T-cell (primary cell): ENCODE measurements at regions of chr12 and their contacts with region 1.

Region 1: GRCh38 chr12:98593351-98594049 is at the start of gene SLC25A3:
- DNase-seq: peak; percentile 82 to 99 (median 93)
- ATAC-seq: peak; percentile 96 to 98 (median 98)
- H3K4me3 ChIP-seq: peak within 1 kb of the TSS; percentile 85 to 97
- H3K4me3 Mint-ChIP-seq: peak within 1 kb of the TSS; percentile 90 to 95 (median 91)
- H3K27ac ChIP-seq: peak within 1 kb of the TSS; percentile 94
- H3K27ac Mint-ChIP-seq: peak within 1 kb of the TSS; percentile 95 to 99
- H3K4me1 ChIP-seq: peaks cover 18 to 21% of the 10 kb centered on the region in 2 experiments
- H3K4me1 Mint-ChIP-seq: peaks cover 27 to 43% (median 35%) of the 10 kb centered on the region in 3 donors
- H3K27me3 ChIP-seq: no peaks in the 10 kb centered on the region
- H3K27me3 Mint-ChIP-seq: no peaks in the 10 kb centered on the region
- total RNA-seq, gene SLC25A3: 256 to 438 (median 269) TPM

Region 2: DNA sequence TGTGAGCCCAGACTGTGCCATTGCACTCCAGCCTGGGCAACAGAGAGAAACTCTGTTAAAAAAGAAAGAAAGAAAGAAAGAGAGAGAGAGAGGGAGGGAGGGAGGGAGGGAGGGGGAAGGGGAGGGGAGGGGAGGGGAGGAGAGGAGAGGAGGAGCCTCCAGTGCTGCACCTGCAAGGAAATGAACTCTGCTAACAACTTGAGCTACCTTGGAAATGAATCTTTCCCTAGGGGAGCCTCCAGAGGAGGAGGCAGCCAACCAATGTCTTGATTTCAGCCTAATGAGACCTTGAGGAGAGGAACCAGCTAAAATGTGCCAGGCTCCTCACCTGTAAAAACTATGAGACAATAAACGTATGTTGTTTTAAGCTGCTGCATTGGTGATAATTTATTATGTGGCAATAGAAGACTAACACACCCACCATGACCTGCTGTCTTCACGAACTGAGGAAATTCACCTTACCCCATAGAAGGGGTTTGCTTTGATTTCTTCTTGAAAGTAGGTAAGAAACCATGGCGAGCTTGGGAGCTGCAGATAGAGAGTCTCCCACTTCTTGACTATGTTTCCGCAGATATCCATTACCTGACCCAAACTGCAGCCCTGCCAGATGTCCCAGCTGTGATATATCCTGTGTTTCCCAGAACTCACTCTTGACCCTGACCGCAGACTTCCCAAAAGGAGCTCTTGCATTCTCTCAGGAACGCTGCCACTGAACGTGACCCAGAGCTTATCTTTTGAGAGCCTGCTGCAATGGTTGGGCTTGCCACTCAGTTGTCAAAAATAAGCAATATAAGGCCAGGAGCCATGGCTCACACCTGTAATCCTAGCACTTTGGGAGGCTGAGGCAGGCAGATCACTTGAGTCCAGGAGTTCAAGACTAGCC is 109.6 kb before region 1 on chr12:
- CTCF ChIA-PET with region 1: no interaction called
- POLR2A ChIA-PET with region 1: no interaction called
- DNase-seq: no peak
- ATAC-seq: no peak
- H3K4me3 ChIP-seq: no peak overlapping the region
- H3K4me3 Mint-ChIP-seq: no peak overlapping the region
- H3K27ac ChIP-seq: no peak overlapping the region
- H3K27ac Mint-ChIP-seq: no peak overlapping the region
- H3K4me1 ChIP-seq: no peaks in the 10 kb centered on the region
- H3K4me1 Mint-ChIP-seq: no peaks in the 10 kb centered on the region
- H3K27me3 ChIP-seq: peaks cover 0 to 3% of the 10 kb centered on the region in 2 experiments
- H3K27me3 Mint-ChIP-seq: no peaks in the 10 kb centered on the region

Region 3: GRCh38 chr12:98578392-98578791 is 15.1 kb before region 1 on chr12:
- CTCF ChIA-PET with region 1: no interaction called
- POLR2A ChIA-PET with region 1: no interaction called
- DNase-seq: no peak
- ATAC-seq: no peak
- H3K4me3 ChIP-seq: no peak overlapping the region
- H3K4me3 Mint-ChIP-seq: no peak overlapping the region
- H3K27ac ChIP-seq: no peak overlapping the region
- H3K27ac Mint-ChIP-seq: no peak overlapping the region
- H3K4me1 ChIP-seq: no peaks in the 10 kb centered on the region
- H3K4me1 Mint-ChIP-seq: no peaks in the 10 kb centered on the region
- H3K27me3 ChIP-seq: peaks cover 0 to 2% of the 10 kb centered on the region in 2 experiments
- H3K27me3 Mint-ChIP-seq: no peaks in the 10 kb centered on the region

Region 4: DNA sequence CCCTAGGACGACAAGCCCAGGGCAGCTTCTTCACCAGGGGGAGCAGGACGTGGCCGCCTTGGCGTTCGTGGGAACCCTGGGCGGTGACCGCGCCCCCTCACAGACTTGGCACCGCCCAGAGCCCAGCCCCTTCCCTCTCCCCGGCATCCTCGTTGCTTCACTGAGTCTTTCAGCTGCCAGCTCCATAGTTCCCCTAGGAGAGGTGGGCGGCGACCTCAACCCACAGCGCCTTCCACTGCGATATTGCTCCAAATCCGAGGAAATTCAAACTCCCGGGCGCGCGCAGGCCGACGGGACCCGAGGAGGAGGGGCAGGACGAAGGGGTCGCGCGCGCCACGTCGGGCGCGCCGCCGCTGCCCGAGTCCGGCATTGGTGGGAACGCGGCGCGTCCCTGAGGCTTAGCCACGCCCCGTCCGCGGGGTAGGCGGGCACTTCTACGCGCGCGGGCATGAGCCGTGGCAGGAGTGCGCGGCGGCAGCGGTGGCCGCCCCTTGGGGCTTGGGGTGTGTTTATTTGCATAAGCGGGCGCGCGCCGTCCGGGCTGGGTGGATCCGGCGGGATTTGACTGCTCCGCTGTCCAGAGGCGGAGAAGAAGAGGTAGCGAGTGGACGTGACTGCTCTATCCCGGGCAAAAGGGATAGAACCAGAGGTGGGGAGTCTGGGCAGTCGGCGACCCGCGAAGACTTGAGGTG is 51.4 kb after region 1 on chr12 and contains the starts of genes APAF1 and IKBIP:
- CTCF ChIA-PET with region 1: interaction called in 1 of 2 experiments, 9 read pairs
- POLR2A ChIA-PET with region 1: interaction called, 7 to 13 read pairs
- DNase-seq: peak; percentile 89 to 98 (median 95)
- ATAC-seq: peak; percentile 91 to 95 (median 92)
- H3K4me3 ChIP-seq: peak within 1 kb of the TSS; percentile 72 to 91
- H3K4me3 Mint-ChIP-seq: peak within 1 kb of the TSS; percentile 97 to 99 (median 98)
- H3K27ac ChIP-seq: peak within 1 kb of the TSS; percentile 54
- H3K27ac Mint-ChIP-seq: peak within 1 kb of the TSS; percentile 92 to 94
- H3K4me1 ChIP-seq: peaks cover 11 to 15% of the 10 kb centered on the region in 2 experiments
- H3K4me1 Mint-ChIP-seq: peaks cover 15 to 42% (median 37%) of the 10 kb centered on the region in 3 donors
- H3K27me3 ChIP-seq: no peaks in the 10 kb centered on the region
- H3K27me3 Mint-ChIP-seq: no peaks in the 10 kb centered on the region
- total RNA-seq, gene APAF1: 20.7 to 27.6 (median 23.5) TPM
- total RNA-seq, gene IKBIP: 2.2 to 8.7 (median 7.3) TPM